HCT116 (cell line): ENCODE measurements at regions of chr17 and their contacts with region 1.

Region 1: GRCh38 chr17:51371732-51372151 is 111.4 kb downstream of the UTP18 start:
- DNase-seq: peak; percentile 84
- ATAC-seq: peak; percentile 87
- H3K4me3 ChIP-seq: peak overlapping the region; percentile 71 to 78
- H3K27ac ChIP-seq: peak overlapping the region; percentile 71
- H3K4me1 ChIP-seq: peaks cover 0 to 16% of the 10 kb centered on the region in 2 experiments; a peak in 1 of 4 replicates
- H3K27me3 ChIP-seq: no peaks in the 10 kb centered on the region
- CTCF ChIP-seq: peak; percentile 88 to 98 (median 96)
- POLR2A ChIP-seq: peak; percentile 27
- RAD21 ChIP-seq: peak; percentile 96

Region 2: DNA sequence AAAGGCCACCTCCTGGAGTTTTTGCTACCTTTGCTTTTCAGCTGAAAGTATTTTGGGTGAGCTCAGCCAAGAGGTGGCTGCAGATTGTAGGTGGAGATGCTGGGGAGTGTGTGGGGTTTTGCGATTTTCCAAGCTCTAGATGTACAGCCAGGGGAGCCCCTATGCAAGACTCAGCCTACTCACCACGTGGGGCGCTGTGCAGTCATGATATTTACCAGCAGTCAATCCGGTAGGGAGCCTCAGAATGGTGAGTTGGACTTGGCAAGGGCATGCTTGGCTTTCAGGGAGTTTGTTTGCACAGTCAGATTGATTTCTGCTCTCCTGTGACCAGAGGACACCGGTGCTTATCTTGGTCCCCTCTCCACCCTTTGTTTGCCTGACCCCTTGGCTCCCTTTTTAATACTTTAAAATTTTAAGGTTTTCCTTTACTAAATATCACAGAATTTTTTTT is 63.9 kb after region 1 on chr17:
- CTCF ChIA-PET with region 1: interaction called, 18 read pairs
- POLR2A ChIA-PET with region 1: no interaction called
- RAD21 ChIA-PET with region 1: no interaction called
- intact Hi-C with region 1: no loop called
- DNase-seq: peak; percentile 85
- ATAC-seq: peak; percentile 97
- H3K4me3 ChIP-seq: no peak overlapping the region
- H3K27ac ChIP-seq: no peak overlapping the region
- H3K4me1 ChIP-seq: peaks cover 9 to 30% of the 10 kb centered on the region in 2 experiments; a peak in 3 of 4 replicates
- H3K27me3 ChIP-seq: no peaks in the 10 kb centered on the region
- CTCF ChIP-seq: peak; percentile 56 to 96 (median 96)
- POLR2A ChIP-seq: no peak
- RAD21 ChIP-seq: peak; percentile 51

Region 3: DNA sequence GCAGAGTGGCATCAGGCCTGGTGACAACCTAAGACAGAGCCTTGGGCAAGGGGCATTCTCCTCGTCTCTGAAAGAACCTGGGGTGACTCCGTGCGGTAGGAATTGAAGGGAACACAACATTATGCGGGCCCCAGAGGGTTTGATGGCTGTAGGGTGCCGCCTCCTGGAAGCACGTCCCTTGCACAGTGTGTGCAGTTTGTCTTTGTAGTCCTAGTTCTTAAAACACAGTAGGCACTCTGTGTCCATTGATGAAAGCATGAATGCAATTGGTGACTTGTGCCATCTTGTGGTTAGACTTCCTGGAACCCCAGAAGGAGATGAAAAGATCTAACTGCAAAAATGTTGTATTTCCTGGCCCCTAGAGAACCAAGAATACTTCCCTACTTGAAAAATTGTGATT is 168.4 kb after region 1 on chr17:
- CTCF ChIA-PET with region 1: interaction called, 11 read pairs
- POLR2A ChIA-PET with region 1: no interaction called
- RAD21 ChIA-PET with region 1: no interaction called
- intact Hi-C with region 1: loop called (anchors 1 kb)
- DNase-seq: peak; percentile 26
- ATAC-seq: peak; percentile 78
- H3K4me3 ChIP-seq: no peak overlapping the region
- H3K27ac ChIP-seq: no peak overlapping the region
- H3K4me1 ChIP-seq: no peaks in the 10 kb centered on the region
- H3K27me3 ChIP-seq: peaks cover 8% of the 10 kb centered on the region; the same call in 1 of the 2 replicates
- CTCF ChIP-seq: peak; percentile 15 to 70 (median 38); a peak in 3 of 6 replicates
- POLR2A ChIP-seq: no peak
- RAD21 ChIP-seq: peak; percentile 67

Region 4: DNA sequence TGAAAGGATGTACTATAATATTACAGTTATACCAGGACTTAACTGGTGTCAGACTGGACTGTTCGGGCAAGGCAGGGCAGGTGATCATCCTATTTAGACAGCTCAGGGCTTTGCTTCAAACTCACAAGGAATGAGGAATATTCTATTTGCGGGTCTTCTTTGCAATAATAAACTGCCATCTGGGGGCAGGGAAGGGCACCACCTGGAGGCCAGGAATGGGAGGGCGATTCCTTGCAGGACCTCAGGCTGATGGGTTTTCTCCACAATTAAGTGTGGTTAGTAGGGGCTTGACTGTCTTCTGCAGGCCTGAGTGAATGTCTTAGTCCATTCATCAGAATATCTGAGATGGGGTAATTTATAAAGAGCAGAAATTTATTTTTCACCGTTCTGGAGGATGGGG is 362.7 kb after region 1 on chr17:
- CTCF ChIA-PET with region 1: interaction called, 14 read pairs
- POLR2A ChIA-PET with region 1: no interaction called
- RAD21 ChIA-PET with region 1: no interaction called
- intact Hi-C with region 1: loop called (anchors 1 kb)
- DNase-seq: peak; percentile 12
- ATAC-seq: peak; percentile 80
- H3K4me3 ChIP-seq: no peak overlapping the region
- H3K27ac ChIP-seq: no peak overlapping the region
- H3K4me1 ChIP-seq: no peaks in the 10 kb centered on the region
- H3K27me3 ChIP-seq: 0 out of 2 replicates have a peak, but pooled peaks cover 10% of the 10 kb centered on the region
- CTCF ChIP-seq: peak; percentile 48 to 80 (median 78); a peak in 5 of 6 replicates
- POLR2A ChIP-seq: no peak
- RAD21 ChIP-seq: peak; percentile 49

Region 5: GRCh38 chr17:52106638-52107261 is 735.0 kb after region 1 on chr17:
- CTCF ChIA-PET with region 1: interaction called, 4 read pairs
- POLR2A ChIA-PET with region 1: no interaction called
- RAD21 ChIA-PET with region 1: no interaction called
- intact Hi-C with region 1: loop called (anchors 5 kb)
- DNase-seq: peak; percentile 19
- ATAC-seq: peak; percentile 50; the same call in 1 of the 2 replicates
- H3K4me3 ChIP-seq: no peak overlapping the region
- H3K27ac ChIP-seq: no peak overlapping the region
- H3K4me1 ChIP-seq: no peaks in the 10 kb centered on the region
- H3K27me3 ChIP-seq: no peaks in the 10 kb centered on the region
- CTCF ChIP-seq: peak; percentile 24 to 96 (median 70); a peak in 4 of 6 replicates
- POLR2A ChIP-seq: no peak
- RAD21 ChIP-seq: peak; percentile 55